GM12878 (cell line): ENCODE measurements at regions of chr15 and their contacts with region 1.

Region 1: DNA sequence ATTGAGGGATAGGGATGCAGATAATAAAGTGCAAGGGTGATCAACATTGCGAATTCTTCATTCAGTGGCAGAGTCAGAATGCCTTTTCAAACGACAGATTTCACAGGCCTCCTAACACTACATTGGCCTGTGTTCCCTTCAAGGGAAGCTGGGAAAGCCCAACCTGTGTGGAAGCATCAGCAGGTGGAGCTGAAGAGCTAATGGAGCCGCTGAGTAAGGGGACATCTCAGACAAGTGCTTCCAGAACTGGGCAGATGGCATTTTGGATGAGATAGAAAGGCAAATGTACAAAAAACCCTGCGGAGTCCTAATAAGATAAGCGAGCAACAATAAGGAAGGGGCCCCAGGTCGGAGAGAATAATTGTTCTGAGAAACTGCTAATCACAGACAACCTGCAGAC is 8.5 kb upstream of the SLC24A5 start:
- DNase-seq: no peak
- ATAC-seq: peak; percentile 61; the same call in 2 of the 3 replicates
- H3K4me3 ChIP-seq: no peak overlapping the region
- H3K27ac ChIP-seq: no peak overlapping the region
- H3K4me1 ChIP-seq: no peaks in the 10 kb centered on the region
- H3K27me3 ChIP-seq: no peaks in the 10 kb centered on the region
- CTCF ChIP-seq: peak; percentile 39 to 58 (median 44); a peak in 5 of 6 replicates
- EP300 ChIP-seq: no peak
- POLR2A ChIP-seq: no peak
- RAD21 ChIP-seq: peak; percentile 60

Region 2: GRCh38 chr15:48143856-48144255 is 31.6 kb after region 1 on chr15:
- CTCF ChIA-PET with region 1: no interaction called
- POLR2A ChIA-PET with region 1: no interaction called
- RAD21 ChIA-PET with region 1: no interaction called
- SMC1A ChIA-PET with region 1: no interaction called
- in situ Hi-C with region 1: no loop called
- intact Hi-C with region 1: no loop called
- DNase-seq: no peak
- ATAC-seq: no peak
- H3K4me3 ChIP-seq: no peak overlapping the region
- H3K27ac ChIP-seq: no peak overlapping the region
- H3K4me1 ChIP-seq: peaks cover 4% of the 10 kb centered on the region; the same call in 1 of the 2 replicates
- H3K27me3 ChIP-seq: no peaks in the 10 kb centered on the region
- CTCF ChIP-seq: no peak
- EP300 ChIP-seq: no peak
- POLR2A ChIP-seq: no peak
- RAD21 ChIP-seq: no peak

Region 3: GRCh38 chr15:48205981-48206380 is 93.7 kb after region 1 on chr15 and contains the start of gene SLC12A1:
- CTCF ChIA-PET with region 1: interaction called, 16 read pairs
- POLR2A ChIA-PET with region 1: no interaction called
- RAD21 ChIA-PET with region 1: interaction called, 10 read pairs
- SMC1A ChIA-PET with region 1: no interaction called
- in situ Hi-C with region 1: no loop called
- intact Hi-C with region 1: no loop called
- DNase-seq: no peak
- ATAC-seq: no peak
- H3K4me3 ChIP-seq: no peak within 1 kb of the TSS
- H3K27ac ChIP-seq: no peak within 1 kb of the TSS
- H3K4me1 ChIP-seq: no peaks in the 10 kb centered on the region
- H3K27me3 ChIP-seq: no peaks in the 10 kb centered on the region
- CTCF ChIP-seq: no peak
- EP300 ChIP-seq: no peak
- POLR2A ChIP-seq: no peak
- RAD21 ChIP-seq: no peak
- polyA plus RNA-seq, gene SLC12A1: not detected

Region 4: DNA sequence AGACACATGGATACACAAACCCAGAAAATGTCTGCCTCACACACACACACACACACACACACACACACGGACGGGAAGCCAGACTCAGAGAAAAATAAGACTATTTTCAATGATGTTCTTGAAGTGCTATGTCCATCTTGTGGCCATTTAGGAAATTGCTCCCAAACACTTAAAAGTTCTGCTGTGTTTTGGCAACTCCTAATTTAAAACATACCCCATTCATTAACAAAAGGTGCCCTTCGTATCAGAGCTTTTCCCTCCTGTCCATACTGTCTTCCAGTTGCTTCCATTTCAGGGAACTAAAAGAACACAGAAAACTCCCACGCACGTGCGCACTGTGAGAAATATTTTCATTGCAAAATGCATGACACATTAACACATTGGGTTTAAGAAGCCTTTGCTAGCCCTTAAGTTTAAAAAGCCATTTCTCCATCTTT is 138.4 kb after region 1 on chr15:
- CTCF ChIA-PET with region 1: interaction called, 5 read pairs
- POLR2A ChIA-PET with region 1: no interaction called
- RAD21 ChIA-PET with region 1: interaction called, 3 read pairs
- SMC1A ChIA-PET with region 1: interaction called, 4 read pairs
- in situ Hi-C with region 1: no loop called
- intact Hi-C with region 1: loop called (anchors 2 kb)
- DNase-seq: peak; percentile 17
- ATAC-seq: peak; percentile 66
- H3K4me3 ChIP-seq: no peak overlapping the region
- H3K27ac ChIP-seq: no peak overlapping the region
- H3K4me1 ChIP-seq: no peaks in the 10 kb centered on the region
- H3K27me3 ChIP-seq: no peaks in the 10 kb centered on the region; a peak in 2 of 4 replicates
- CTCF ChIP-seq: peak; percentile 71 to 73 (median 73)
- EP300 ChIP-seq: no peak
- POLR2A ChIP-seq: no peak
- RAD21 ChIP-seq: peak; percentile 70

Region 5: DNA sequence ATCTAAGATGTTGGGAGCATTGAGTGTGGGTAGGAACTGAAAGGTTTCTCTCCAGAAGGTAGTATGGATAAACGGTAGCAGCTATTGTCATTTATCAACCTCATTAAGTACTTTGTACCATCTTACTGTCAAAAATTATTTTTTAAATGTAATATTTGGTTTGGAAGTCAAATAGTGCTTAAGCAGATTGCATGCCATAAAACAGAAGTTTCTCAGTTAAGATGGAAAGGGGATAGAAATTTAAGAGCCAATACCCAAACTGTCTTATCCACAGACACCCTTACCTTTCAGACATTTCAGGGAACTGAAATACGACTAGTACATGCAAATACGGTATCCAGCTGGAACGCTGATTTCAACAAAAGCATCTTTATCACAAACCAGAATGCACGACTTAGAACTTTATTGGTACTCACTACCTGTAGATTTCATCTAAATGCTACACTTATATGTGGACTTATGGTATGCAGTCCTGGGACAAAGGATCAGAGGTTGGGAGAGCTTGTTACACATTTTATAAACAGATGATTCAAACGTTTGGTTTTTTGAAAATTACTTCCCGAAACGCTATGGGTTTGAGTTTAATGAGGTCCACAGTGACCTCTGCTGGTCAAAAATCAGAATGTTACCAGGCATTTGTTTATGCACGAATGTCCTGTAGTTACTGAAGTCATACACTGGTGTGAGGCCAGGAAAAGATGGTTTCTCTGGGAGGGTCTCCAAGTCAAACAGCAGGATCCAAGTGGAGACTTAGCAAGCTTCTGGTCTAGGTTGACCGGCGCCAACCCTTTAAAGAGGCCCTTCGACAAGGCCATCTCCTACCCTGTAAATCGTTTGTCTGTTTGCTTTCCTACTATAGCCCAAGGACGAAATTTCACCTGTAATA is 173.3 kb after region 1 on chr15:
- CTCF ChIA-PET with region 1: interaction called, 38 read pairs
- POLR2A ChIA-PET with region 1: no interaction called
- RAD21 ChIA-PET with region 1: interaction called, 21 read pairs
- SMC1A ChIA-PET with region 1: interaction called, 8 read pairs
- in situ Hi-C with region 1: no loop called
- intact Hi-C with region 1: no loop called
- DNase-seq: peak; percentile 38
- ATAC-seq: peak; percentile 92
- H3K4me3 ChIP-seq: no peak overlapping the region
- H3K27ac ChIP-seq: no peak overlapping the region
- H3K4me1 ChIP-seq: no peaks in the 10 kb centered on the region
- H3K27me3 ChIP-seq: no peaks in the 10 kb centered on the region
- CTCF ChIP-seq: peak; percentile 59 to 75 (median 73); a peak in 5 of 6 replicates
- EP300 ChIP-seq: no peak
- POLR2A ChIP-seq: no peak
- RAD21 ChIP-seq: peak; percentile 57